Activated CD4-positive, alpha-beta T cell treated with anti-CD3 and anti-CD28 coated beads, Interleukin-2, amount 10 ng/mL, durations not matched to agents 24 days and 14 days (primary cell): ENCODE measurements at regions of chr14 and their contacts with region 1.

Region 1: GRCh38 chr14:69153131-69153872 is 383 bp upstream of the DCAF5 start:
- DNase-seq: peak; percentile 97
- H3K4me3 Mint-ChIP-seq: peak overlapping the region; percentile 81
- H3K27ac Mint-ChIP-seq: peak overlapping the region; percentile 68
- H3K4me1 Mint-ChIP-seq: peaks cover 25% of the 10 kb centered on the region
- H3K27me3 Mint-ChIP-seq: peaks cover 32% of the 10 kb centered on the region

Region 2: DNA sequence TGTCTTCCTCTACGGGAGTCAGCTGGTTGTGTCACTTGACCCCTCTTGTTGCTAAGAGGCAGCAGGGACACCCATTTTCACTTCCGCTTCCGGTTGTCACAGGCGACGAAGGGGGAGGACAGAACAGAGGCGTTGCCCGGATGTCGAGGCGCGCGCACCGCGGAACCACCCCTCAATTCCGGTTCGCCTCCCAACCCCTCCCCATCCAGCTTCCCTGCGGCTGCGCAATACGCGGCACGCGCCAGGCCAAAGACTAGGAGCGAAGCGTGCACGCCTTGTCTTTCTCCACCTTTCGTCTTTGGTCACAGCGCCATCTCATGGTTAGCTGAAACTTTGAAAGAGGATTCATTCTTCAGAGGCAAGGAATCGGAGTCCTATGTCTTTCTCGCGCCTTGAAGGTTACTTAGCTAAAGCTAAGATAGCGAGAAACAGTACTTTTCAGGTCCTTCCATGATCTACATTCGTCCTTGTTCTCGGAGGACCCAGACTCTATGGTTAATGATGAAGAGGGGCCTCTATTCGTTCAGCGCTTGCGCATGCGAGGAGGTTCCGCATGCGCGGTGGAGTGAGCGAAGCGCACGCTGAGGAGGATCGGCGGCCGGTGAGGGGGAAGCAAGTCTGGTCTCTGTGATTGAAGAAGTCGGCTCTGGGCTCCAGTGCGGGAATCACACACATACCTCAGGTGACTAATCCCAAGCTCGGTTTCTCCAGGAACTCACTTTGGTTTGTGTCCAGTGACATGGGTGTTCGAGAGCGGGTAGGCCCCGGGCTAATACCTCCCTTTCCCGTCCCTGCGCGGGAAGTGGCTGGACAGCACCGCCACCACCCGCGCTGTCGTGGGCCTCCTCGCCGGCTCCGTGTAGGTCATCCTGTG is 1793.3 kb before region 1 on chr14 and contains the starts of genes ATP6V1D and EIF2S1:
- intact Hi-C with region 1: loop called (anchors 10 kb)
- DNase-seq: peak; percentile 100
- H3K4me3 Mint-ChIP-seq: peak within 1 kb of the TSS; percentile 94
- H3K27ac Mint-ChIP-seq: peak within 1 kb of the TSS; percentile 99
- H3K4me1 Mint-ChIP-seq: peaks cover 44% of the 10 kb centered on the region
- H3K27me3 Mint-ChIP-seq: peaks cover 4% of the 10 kb centered on the region
- total RNA-seq, gene ATP6V1D: 29.7 and 30.1 TPM in 2 replicates
- total RNA-seq, gene EIF2S1: 255 and 268 TPM in 2 replicates

Region 3: GRCh38 chr14:69107407-69108003 is 45.8 kb before region 1 on chr14:
- intact Hi-C with region 1: no loop called
- DNase-seq: peak; percentile 79
- H3K4me3 Mint-ChIP-seq: no peak overlapping the region
- H3K27ac Mint-ChIP-seq: no peak overlapping the region
- H3K4me1 Mint-ChIP-seq: no peaks in the 10 kb centered on the region
- H3K27me3 Mint-ChIP-seq: no peaks in the 10 kb centered on the region

Region 4: GRCh38 chr14:69129264-69129880 is 23.9 kb before region 1 on chr14:
- intact Hi-C with region 1: loop called (anchors 2 kb)
- DNase-seq: peak; percentile 89
- H3K4me3 Mint-ChIP-seq: no peak overlapping the region
- H3K27ac Mint-ChIP-seq: no peak overlapping the region
- H3K4me1 Mint-ChIP-seq: peaks cover 26% of the 10 kb centered on the region
- H3K27me3 Mint-ChIP-seq: no peaks in the 10 kb centered on the region

Region 5: DNA sequence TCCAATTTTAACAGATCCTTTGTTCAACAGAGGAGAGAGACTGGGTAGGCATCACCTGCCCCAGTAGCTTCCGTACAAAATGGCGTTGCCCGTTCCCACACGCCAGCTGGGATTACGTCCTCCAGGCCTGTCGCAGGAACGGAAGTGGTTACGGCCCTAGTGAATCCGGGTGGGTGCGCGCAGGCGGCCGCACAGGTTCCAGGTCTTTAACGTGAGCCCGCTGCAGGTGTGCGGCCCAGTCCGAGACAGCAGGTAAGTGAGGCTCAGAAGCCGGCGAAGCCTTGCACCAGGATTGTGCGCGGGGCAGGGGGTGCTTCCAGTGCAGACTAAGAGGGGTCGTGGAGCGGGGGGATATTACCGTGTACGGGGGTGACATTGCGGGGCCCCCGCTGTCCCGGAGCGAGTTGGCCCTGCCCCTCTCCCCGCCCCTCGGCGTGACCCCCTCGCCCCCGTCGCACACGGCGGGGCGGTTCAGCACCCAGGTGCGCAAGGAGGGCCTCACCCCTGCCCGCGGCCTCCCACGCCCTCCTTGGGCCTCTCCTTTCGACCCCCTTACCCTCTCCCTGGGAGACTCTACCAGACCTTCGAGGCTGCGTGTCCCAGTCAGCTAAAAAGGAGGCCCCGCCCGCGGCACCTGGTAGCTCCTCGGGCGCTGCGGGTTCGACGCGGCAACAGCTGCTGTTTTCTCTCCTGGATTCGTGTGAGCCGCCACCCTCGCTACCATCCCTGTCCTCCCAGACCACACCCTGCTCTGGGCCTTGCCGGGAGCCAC is 38.2 kb after region 1 on chr14 and contains the start of gene EXD2:
- intact Hi-C with region 1: loop called (anchors 1 kb)
- DNase-seq: peak; percentile 87
- H3K4me3 Mint-ChIP-seq: peak within 1 kb of the TSS; percentile 93
- H3K27ac Mint-ChIP-seq: peak within 1 kb of the TSS; percentile 83
- H3K4me1 Mint-ChIP-seq: peaks cover 11% of the 10 kb centered on the region
- H3K27me3 Mint-ChIP-seq: peaks cover 11% of the 10 kb centered on the region
- total RNA-seq, gene EXD2: 6.3 and 7.5 TPM in 2 replicates

Region 6: GRCh38 chr14:69398053-69398817 is 244.9 kb after region 1 on chr14 and contains the starts of genes ERH and SLC39A9:
- intact Hi-C with region 1: loop called (anchors 1 kb)
- DNase-seq: peak; percentile 98
- H3K4me3 Mint-ChIP-seq: peak within 1 kb of the TSS; percentile 94
- H3K27ac Mint-ChIP-seq: peak within 1 kb of the TSS; percentile 98
- H3K4me1 Mint-ChIP-seq: peaks cover 49% of the 10 kb centered on the region
- H3K27me3 Mint-ChIP-seq: no peaks in the 10 kb centered on the region
- total RNA-seq, gene ERH: 434 and 441 TPM in 2 replicates
- total RNA-seq, gene SLC39A9: 49.5 and 53.4 TPM in 2 replicates

Region 7: GRCh38 chr14:69766984-69767368 is 613.7 kb after region 1 on chr14 and contains the start of gene SRSF5:
- intact Hi-C with region 1: loop called (anchors 2 kb)
- DNase-seq: peak; percentile 99
- H3K4me3 Mint-ChIP-seq: peak within 1 kb of the TSS; percentile 99
- H3K27ac Mint-ChIP-seq: peak within 1 kb of the TSS; percentile 100
- H3K4me1 Mint-ChIP-seq: peaks cover 56% of the 10 kb centered on the region
- H3K27me3 Mint-ChIP-seq: peaks cover 5% of the 10 kb centered on the region
- total RNA-seq, gene SRSF5: 319 and 322 TPM in 2 replicates

Region 8: DNA sequence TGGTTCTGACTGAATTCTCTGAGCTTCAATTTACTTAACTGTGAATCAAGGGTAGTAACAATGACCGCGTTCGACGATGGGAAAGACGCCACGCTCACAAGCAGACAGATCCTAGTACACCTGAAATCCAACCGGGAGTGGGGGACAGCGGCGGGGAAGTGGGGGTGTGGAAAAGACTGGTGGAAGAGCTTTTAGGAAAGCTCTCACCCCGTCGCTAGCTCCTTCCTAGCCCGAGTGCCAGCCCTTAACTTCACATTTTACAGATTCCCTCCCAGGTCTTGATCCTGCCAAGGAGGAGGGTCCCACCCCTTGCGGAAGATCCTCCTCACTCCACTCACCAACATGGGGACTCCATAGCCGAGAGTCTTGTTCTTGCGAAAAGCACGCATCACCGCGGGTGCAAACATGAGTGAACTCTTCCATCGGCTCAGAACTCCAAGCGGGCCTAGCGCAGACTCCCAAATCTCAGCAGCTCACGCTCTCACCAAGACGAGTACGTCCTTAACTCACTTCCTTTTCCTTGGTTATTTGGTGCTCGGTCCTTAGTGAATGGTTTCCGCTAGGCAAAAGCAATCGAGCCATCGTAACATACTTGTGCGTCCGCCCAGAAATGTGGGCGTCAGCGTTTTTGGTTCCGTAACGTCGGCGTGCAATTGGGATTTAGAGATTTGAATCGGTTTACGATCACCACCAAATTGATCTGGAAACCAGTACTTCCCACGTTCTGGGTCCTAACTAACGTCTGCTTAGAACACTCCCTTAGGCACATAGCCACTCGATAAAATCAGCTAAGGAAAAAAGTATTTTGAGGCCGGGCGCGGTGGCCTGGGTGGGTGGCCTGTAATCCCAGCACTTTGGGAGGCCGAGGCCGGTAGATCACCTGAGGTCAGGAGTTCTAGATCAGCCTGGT is 1206.1 kb after region 1 on chr14 and contains the start of gene COX16:
- intact Hi-C with region 1: loop called (anchors 2 kb)
- DNase-seq: peak; percentile 95
- H3K4me3 Mint-ChIP-seq: peak within 1 kb of the TSS; percentile 98
- H3K27ac Mint-ChIP-seq: peak within 1 kb of the TSS; percentile 91
- H3K4me1 Mint-ChIP-seq: peaks cover 18% of the 10 kb centered on the region
- H3K27me3 Mint-ChIP-seq: peaks cover 6% of the 10 kb centered on the region
- total RNA-seq, gene COX16: 65.8 and 79.0 TPM in 2 replicates